ENCODE measurements at regions of chr1 and their contacts with region 1.

Region 1: DNA sequence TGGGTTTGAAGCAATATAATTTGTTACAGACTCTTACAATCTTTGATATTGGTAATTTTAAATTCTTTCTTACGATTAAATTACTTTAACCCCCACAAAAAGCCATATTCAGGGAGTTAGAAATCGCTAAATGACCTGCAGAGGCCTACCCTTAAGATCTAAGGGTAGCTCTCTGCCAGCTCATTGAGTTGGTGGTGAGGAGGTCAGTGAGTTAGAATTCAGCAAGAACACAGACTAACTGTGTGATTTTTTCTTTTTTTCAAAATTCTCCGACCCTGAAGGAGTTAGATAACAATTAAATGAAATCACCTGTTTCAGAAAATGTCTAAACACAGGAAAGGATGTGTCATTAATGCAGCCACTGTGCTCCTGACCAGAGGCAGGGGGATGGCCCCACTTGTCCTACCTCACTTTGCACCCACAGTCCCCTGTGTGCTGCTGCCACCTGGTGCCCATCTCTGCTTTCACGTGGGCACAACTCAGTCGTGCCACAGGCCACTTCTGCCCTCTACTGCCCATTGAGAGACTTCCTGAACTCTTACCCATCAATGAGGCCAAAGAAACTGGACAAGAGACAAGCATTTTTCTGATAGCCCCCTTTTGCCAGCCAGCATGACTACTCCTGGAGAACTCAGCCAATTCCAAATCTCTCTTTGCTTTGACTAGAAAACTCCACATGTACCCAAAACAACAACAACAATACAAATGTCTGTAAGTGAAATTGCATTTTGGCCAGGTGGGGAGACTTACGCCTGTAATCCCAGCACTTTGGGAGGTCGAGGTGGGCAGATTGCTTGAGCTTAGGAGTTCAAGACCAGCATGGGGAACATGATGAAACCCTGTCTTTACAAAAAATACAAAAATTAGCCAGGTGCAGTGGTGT is 8.4 kb downstream of the CFAP45 start:
- DNase-seq: peak; percentile 75
- H3K4me3 ChIP-seq: no peak overlapping the region
- H3K27ac ChIP-seq: no peak overlapping the region
- H3K4me1 ChIP-seq: peaks cover 28% of the 10 kb centered on the region
- CTCF ChIP-seq: peak; percentile 98

Region 2: DNA sequence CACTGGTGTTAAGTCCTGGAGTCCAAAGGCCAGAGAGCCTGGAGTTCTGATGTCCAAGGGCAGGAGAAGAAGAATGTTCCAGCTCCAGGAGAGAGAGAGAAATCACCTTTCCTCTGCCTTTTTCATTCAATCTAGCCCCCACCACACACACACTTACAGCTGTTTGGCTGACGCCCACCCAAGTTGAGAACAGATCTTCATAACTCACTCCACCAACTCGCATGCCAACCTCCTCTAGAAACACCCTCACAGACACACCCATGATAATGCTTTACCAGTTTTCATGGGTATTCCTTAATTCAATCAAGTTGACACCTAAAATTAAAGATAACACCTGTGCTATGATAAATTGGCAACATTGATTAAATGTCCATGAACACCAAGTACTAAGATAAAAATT is 1018.4 kb before region 1 on chr1:
- CTCF ChIA-PET with region 1: no interaction called
- POLR2A ChIA-PET with region 1: no interaction called
- intact Hi-C with region 1: no loop called
- DNase-seq: no peak
- H3K4me3 ChIP-seq: no peak overlapping the region
- H3K27ac ChIP-seq: no peak overlapping the region
- H3K4me1 ChIP-seq: no peaks in the 10 kb centered on the region
- CTCF ChIP-seq: no peak

Region 3: GRCh38 chr1:159780583-159781582 is 110.6 kb before region 1 on chr1 and contains the start of gene DUSP23:
- CTCF ChIA-PET with region 1: no interaction called
- POLR2A ChIA-PET with region 1: no interaction called
- intact Hi-C with region 1: loop called (anchors 1 kb)
- DNase-seq: peak; percentile 49
- H3K4me3 ChIP-seq: peak within 1 kb of the TSS; percentile 31
- H3K27ac ChIP-seq: no peak within 1 kb of the TSS
- H3K4me1 ChIP-seq: no peaks in the 10 kb centered on the region
- CTCF ChIP-seq: peak; percentile 75
- total RNA-seq, gene DUSP23: 1.2 and 3.7 TPM in 2 replicates

Region 4: GRCh38 chr1:159798893-159799292 is 92.6 kb before region 1 on chr1:
- CTCF ChIA-PET with region 1: interaction called, 30 read pairs
- POLR2A ChIA-PET with region 1: interaction called, 7 read pairs
- intact Hi-C with region 1: loop called (anchors 1 kb)
- DNase-seq: peak; percentile 50
- H3K4me3 ChIP-seq: no peak overlapping the region
- H3K27ac ChIP-seq: no peak overlapping the region
- H3K4me1 ChIP-seq: no peaks in the 10 kb centered on the region
- CTCF ChIP-seq: peak; percentile 84

Region 5: DNA sequence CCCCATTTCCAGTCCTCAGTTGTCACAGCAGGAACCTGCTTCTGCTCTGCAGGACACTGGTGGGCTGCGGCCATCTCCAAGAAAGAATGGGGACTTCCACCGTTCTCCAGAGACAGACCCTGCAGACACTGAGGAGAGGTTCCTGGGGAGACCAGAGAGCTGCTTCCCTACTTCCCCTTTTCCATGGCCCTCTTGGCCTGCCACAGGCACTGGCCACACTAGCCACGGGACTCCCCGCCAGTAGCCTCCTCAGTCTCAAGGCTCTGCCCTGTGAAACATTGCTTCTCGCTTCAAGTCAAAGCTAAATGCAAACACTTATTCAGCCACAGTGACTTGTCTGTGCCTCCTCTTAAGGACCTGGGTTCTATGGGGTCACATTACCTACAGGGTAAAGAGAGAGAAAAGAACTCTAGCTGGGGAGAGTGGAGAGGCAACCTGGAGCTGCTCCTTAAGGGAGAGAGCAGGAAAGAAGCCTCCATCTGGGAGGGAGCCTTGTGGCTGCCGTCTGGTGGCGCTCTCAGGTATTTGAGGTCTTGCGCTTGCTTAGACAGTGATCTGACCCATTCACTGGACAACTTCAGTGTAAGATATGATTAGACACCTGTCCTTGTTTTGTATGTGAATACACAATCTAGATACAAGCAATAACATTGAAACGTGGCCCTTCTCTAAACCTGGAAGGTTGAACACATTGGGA is 70.2 kb before region 1 on chr1:
- CTCF ChIA-PET with region 1: no interaction called
- POLR2A ChIA-PET with region 1: no interaction called
- intact Hi-C with region 1: loop called (anchors 1 kb)
- DNase-seq: peak; percentile 38
- H3K4me3 ChIP-seq: no peak overlapping the region
- H3K27ac ChIP-seq: no peak overlapping the region
- H3K4me1 ChIP-seq: no peaks in the 10 kb centered on the region
- CTCF ChIP-seq: peak; percentile 75

Region 6: DNA sequence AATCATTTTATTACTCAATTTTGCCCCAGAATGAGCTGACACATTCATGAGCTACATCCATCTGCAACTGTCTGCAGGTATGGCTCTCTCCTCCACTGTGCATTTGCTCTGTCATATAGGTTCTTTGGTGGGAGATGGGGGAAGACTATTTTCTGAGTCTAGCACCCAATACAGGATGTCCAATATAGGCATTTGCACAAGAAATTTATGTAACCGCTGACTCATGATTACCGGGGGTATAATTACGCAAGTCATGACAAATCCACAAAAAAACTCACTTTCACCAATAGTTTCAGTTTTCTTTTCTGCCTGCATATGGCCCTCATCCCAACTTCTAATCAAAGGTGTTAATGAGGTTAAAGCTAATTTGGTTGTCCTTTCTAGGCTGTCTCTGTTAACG is 11.5 kb before region 1 on chr1:
- CTCF ChIA-PET with region 1: no interaction called
- POLR2A ChIA-PET with region 1: interaction called, 13 read pairs
- intact Hi-C with region 1: no loop called
- DNase-seq: no peak
- H3K4me3 ChIP-seq: no peak overlapping the region
- H3K27ac ChIP-seq: no peak overlapping the region
- H3K4me1 ChIP-seq: no peaks in the 10 kb centered on the region
- CTCF ChIP-seq: no peak

Region 7: DNA sequence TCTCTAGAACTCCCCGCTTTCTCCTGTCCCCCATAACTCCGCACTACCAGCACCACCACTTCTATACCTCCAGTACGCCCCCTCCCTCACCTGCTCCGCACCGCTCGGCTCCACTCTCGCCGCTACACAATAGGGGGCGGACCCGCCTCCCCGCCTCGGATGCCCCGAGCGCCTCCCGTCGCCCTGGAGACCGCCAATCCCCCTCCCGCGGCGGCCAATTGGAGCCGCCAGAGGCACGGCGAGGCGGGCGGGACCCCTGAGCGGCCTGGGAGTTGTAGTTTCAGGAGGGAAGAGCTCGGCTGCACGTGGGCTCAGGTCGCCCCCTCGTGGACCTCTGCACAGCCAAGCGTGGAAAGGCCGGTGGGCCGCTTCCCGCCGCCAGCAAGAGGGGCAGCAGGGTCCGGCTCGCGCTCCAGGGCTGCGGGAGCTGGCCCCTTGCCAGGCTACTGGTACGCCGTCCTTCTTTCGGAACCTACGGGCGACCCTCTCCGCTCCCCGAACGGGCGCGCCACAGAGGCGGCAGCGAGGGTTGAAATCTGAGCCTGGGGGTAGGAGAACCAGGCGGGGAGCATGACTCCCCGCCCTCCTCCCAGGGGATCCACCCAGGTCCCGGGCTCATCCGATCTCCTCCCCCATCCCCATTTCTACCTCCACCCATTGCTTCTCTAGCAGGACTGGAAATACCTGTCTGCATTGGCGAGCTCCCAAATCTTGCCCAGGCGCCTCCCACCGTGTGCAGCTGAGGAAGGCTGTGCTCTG is 54.1 kb after region 1 on chr1 and contains the start of gene IGSF9:
- CTCF ChIA-PET with region 1: no interaction called
- POLR2A ChIA-PET with region 1: no interaction called
- intact Hi-C with region 1: no loop called
- DNase-seq: peak; percentile 58
- H3K4me3 ChIP-seq: no peak within 1 kb of the TSS
- H3K27ac ChIP-seq: no peak within 1 kb of the TSS
- H3K4me1 ChIP-seq: no peaks in the 10 kb centered on the region
- CTCF ChIP-seq: peak; percentile 49
- total RNA-seq, gene IGSF9: not detected in 2 replicates

Region 8: DNA sequence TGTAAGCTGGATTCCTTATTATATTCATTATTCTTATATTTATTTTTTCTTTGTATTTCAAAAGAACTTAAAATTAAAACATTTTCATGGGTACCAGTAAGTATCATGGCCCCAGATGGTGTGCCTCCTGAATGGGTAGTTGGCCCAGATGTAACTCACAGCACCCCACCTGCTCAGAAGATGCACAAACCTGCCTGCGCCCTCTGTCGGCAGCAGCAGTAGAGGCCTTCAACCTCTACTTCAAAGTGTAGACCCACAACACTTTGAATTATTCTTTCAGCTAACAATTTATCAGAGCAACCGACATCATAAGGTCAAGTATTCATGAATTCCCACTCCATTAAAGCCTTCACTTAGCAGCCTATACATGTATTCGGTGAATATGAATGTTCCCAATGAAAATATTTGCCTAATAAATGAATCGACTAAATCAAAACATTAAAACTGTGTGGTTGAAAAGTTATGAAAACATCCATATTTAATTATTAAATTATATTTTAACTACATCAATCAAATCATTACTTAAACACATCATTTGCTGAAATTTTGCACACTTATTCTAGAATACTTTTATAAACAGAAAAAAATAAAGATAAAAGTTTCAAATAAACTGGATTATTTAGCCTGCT is 114.9 kb after region 1 on chr1:
- CTCF ChIA-PET with region 1: interaction called, 11 read pairs
- POLR2A ChIA-PET with region 1: interaction called, 5 read pairs
- intact Hi-C with region 1: loop called (anchors 2 kb)
- DNase-seq: peak; percentile 80
- H3K4me3 ChIP-seq: no peak overlapping the region
- H3K27ac ChIP-seq: no peak overlapping the region
- H3K4me1 ChIP-seq: no peaks in the 10 kb centered on the region
- CTCF ChIP-seq: peak; percentile 97

Measured in OCI-LY7 (cell line).